Breast epithelium (tissue), 4 donors: ENCODE measurements at regions of chr2 and their contacts with region 1.

Region 1: GRCh38 chr2:105827351-105828096 is 82.8 kb downstream of the NCK2 start:
- DNase-seq: no peak
- H3K4me3 ChIP-seq: no peak overlapping the region
- H3K27ac ChIP-seq: no peak overlapping the region
- H3K4me1 ChIP-seq: no peaks in the 10 kb centered on the region
- H3K27me3 ChIP-seq: no peaks in the 10 kb centered on the region
- CTCF ChIP-seq: no peak
- POLR2A ChIP-seq: no peak

Region 2: DNA sequence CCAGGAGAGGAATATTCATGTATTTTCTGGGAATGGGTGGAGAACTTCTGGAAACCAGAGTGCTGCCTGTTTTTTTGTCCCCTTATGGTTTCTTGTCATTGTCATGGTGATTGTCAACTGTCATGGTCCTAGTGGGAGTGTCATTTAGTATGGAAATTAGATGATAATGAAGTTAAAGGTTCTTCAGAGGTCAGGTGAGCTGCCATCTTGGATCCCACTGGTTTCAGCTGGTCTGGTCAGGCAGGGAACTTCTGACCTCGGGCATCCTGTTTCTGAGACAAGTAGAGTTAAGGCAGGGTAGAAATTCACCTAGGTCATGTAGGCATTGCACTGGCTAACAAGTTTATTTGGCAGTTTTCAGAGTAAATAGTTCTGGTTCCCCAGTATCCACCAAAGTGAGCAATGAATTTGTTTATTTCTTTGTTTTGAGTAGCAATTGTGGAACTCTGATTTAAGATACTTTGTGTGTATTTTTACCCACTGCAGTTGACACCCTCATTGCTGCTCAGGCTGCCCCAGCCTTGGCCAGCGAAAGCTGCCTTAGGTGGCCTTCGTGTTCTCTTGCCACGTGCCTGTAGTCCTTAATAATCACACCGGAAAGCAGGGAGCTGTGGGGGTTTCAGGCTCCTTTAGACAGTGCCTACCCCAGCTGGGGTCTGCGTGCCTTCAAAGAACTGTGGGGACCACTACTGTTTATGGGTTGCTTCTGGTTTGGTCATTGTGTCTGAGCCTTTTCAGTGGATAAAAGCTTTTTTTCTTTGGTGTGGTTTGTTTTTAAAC is 34.1 kb before region 1 on chr2:
- intact Hi-C with region 1: loop called (anchors 2 kb)
- DNase-seq: no peak
- H3K4me3 ChIP-seq: no peak overlapping the region
- H3K27ac ChIP-seq: no peak overlapping the region
- H3K4me1 ChIP-seq: peaks cover 4 to 20% of the 10 kb centered on the region in 2 donors
- H3K27me3 ChIP-seq: no peaks in the 10 kb centered on the region
- CTCF ChIP-seq: no peak
- POLR2A ChIP-seq: no peak

Region 3: DNA sequence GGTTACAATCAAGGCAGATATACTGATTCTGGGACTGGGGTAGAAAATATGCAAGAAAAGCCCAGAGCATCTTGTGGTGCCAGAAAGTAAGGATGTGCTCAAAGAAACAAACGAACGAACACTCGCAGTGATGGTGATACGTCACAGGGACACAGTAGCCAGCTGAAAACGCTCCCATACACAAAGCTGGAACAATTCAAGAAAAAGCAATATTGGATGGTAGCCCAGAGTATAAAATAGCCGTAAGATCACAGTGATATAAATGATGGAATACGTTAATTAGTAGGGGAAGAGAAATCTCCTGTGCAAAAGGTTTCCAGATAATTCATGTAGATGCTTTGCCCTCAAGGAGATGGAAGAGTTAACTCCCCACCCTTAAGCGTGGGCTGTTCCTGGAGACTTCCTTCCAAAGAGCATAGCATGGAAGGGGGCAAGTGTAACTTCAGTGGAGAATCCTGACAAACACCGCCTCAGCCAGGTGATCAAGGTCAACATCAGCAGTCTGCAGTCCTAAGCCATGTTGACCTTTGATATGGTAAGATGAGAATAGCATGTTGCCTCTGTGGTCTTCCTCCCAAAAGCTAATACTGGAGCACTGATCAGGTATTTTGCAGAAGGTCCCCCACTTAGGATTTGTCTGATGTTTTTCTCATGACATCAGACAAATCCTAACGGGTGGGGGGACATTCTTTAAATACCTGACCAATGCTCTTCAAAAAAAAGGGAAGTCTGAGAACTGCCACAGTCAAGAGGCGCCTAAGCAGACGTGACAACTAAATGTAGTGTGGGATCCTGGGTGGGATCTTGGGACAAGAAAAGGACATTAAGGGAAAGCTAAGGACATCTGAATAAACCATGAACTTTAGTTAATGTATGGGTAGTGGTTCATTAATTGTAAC is 16.2 kb after region 1 on chr2:
- intact Hi-C with region 1: no loop called
- DNase-seq: no peak
- H3K4me3 ChIP-seq: no peak overlapping the region
- H3K27ac ChIP-seq: no peak overlapping the region
- H3K4me1 ChIP-seq: no peaks in the 10 kb centered on the region
- H3K27me3 ChIP-seq: no peaks in the 10 kb centered on the region
- CTCF ChIP-seq: no peak
- POLR2A ChIP-seq: no peak